PC-9 (cell line): ENCODE measurements at regions of chr4 and their contacts with region 1.

Region 1: DNA sequence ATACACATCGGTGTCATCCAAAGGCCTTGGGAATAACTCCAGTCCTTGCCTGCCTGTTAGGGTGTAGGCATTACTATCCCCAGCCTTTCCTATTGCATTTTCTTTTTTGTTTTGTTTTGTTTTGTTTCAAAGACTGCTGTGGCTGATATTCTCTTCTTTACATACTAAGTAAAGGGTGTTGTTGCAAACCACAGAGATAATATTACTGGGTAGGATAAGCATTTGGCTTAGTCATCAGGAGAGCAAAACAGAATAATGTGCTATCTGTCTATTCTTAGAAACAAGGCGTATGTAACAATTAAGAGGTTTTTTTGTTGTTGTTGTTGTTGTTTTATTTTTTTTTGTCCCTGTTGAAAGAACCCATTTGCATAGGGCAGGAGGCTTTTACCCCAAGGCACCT is 41.8 kb downstream of the UGT2B28 start:
- DNase-seq: no peak
- H3K4me3 ChIP-seq: no peak overlapping the region
- H3K27ac ChIP-seq: no peak overlapping the region
- H3K4me1 ChIP-seq: no peaks in the 10 kb centered on the region
- H3K27me3 ChIP-seq: no peaks in the 10 kb centered on the region
- CTCF ChIP-seq: no peak

Region 2: DNA sequence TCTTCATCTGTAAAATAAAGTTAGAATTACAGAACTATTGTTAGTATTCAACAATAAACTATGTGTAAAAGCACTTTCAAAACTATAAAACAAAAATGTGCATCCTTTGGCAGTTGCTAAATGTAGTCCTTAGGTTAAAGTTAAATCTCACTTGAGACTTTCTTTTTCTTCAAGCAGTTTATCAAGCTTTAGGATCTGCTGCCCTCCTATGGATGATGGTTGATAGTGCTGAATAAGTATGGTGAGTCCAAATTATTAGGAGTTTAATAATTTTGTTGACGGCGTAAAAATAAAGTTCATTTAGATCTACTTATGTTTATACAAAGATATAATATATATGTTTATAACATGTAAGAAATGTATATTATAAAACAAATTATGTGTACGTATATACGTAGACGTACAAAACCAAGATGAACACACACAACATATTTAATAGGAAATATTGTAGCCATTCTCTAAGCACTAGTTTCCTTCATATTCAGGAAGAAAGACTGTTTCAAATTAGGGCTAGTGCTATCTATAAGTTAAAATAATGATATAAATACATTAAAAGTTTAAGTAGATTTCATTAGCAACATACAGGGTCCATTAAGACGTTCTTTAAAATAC is 295.1 kb after region 1 on chr4:
- CTCF ChIA-PET with region 1: interaction called, 4 read pairs
- POLR2A ChIA-PET with region 1: no interaction called
- intact Hi-C with region 1: loop called (anchors 2 kb)
- DNase-seq: no peak
- H3K4me3 ChIP-seq: no peak overlapping the region
- H3K27ac ChIP-seq: no peak overlapping the region
- H3K4me1 ChIP-seq: no peaks in the 10 kb centered on the region
- H3K27me3 ChIP-seq: no peaks in the 10 kb centered on the region
- CTCF ChIP-seq: peak; percentile 57